Natural killer cell (primary cell): ENCODE measurements at regions of chr2 and their contacts with region 1.

Region 1: GRCh38 chr2:219029829-219030165 is 11.5 kb downstream of the CFAP65 start:
- DNase-seq: peak; percentile 70 to 89
- ATAC-seq: peak; percentile 78 to 97 (median 96)
- H3K4me3 ChIP-seq: no peak overlapping the region
- H3K4me3 Mint-ChIP-seq: no peak overlapping the region
- H3K27ac ChIP-seq: no peak overlapping the region
- H3K27ac Mint-ChIP-seq: no peak overlapping the region
- H3K4me1 ChIP-seq: no peaks in the 10 kb centered on the region
- H3K4me1 Mint-ChIP-seq: no peaks in the 10 kb centered on the region
- H3K27me3 ChIP-seq: no peaks in the 10 kb centered on the region
- H3K27me3 Mint-ChIP-seq: peaks cover 19 to 20% of the 10 kb centered on the region in 2 donors
- CTCF ChIP-seq: peak; percentile 93

Region 2: GRCh38 chr2:218860950-218861381 is 168.8 kb before region 1 on chr2:
- intact Hi-C with region 1: no loop called
- DNase-seq: peak; percentile 13 to 49
- ATAC-seq: peak in 1 of 3 donors; percentile 46
- H3K4me3 ChIP-seq: no peak overlapping the region
- H3K4me3 Mint-ChIP-seq: no peak overlapping the region
- H3K27ac ChIP-seq: no peak overlapping the region
- H3K27ac Mint-ChIP-seq: no peak overlapping the region
- H3K4me1 ChIP-seq: peaks cover 20% of the 10 kb centered on the region
- H3K4me1 Mint-ChIP-seq: peaks cover 0 to 26% of the 10 kb centered on the region in 2 donors
- H3K27me3 ChIP-seq: peaks cover 46% of the 10 kb centered on the region
- H3K27me3 Mint-ChIP-seq: peaks cover 59 to 65% of the 10 kb centered on the region in 2 donors
- CTCF ChIP-seq: no peak

Region 3: DNA sequence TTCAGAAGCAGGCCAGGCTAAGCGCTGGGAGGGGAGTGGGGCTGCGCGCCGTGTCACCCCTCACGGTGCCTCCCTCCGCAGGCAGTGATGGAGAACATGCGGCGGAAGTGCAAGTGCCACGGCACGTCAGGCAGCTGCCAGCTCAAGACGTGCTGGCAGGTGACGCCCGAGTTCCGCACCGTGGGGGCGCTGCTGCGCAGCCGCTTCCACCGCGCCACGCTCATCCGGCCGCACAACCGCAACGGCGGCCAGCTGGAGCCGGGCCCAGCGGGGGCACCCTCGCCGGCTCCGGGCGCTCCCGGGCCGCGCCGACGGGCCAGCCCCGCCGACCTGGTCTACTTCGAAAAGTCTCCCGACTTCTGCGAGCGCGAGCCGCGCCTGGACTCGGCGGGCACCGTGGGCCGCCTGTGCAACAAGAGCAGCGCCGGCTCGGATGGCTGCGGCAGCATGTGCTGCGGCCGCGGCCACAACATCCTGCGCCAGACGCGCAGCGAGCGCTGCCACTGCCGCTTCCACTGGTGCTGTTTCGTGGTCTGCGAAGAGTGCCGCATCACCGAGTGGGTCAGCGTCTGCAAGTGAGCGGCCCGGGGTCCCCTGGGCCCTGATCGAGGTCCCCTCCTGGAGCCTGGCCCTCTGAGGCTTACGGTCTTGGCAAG is 137.0 kb before region 1 on chr2:
- intact Hi-C with region 1: no loop called
- DNase-seq: peak; percentile 88 to 96
- ATAC-seq: peak; percentile 58 to 78 (median 67)
- H3K4me3 ChIP-seq: peak overlapping the region; percentile 31
- H3K4me3 Mint-ChIP-seq: peak overlapping the region; percentile 81
- H3K27ac ChIP-seq: peak overlapping the region; percentile 87
- H3K27ac Mint-ChIP-seq: peak overlapping the region; percentile 89 to 95
- H3K4me1 ChIP-seq: peaks cover 60% of the 10 kb centered on the region
- H3K4me1 Mint-ChIP-seq: peaks cover 38 to 55% of the 10 kb centered on the region in 2 donors
- H3K27me3 ChIP-seq: peaks cover 6% of the 10 kb centered on the region
- H3K27me3 Mint-ChIP-seq: peaks cover 33 to 36% of the 10 kb centered on the region in 2 donors
- CTCF ChIP-seq: peak; percentile 53

Region 4: GRCh38 chr2:218908721-218909619 is 120.8 kb before region 1 on chr2:
- intact Hi-C with region 1: no loop called
- DNase-seq: peak; percentile 86 to 95
- ATAC-seq: peak; percentile 94 to 98 (median 98)
- H3K4me3 ChIP-seq: peak overlapping the region; percentile 51
- H3K4me3 Mint-ChIP-seq: peak overlapping the region; percentile 81
- H3K27ac ChIP-seq: no peak overlapping the region
- H3K27ac Mint-ChIP-seq: peak overlapping the region; percentile 56 to 75
- H3K4me1 ChIP-seq: peaks cover 12% of the 10 kb centered on the region
- H3K4me1 Mint-ChIP-seq: peaks cover 0 to 12% of the 10 kb centered on the region in 2 donors
- H3K27me3 ChIP-seq: peaks cover 3% of the 10 kb centered on the region
- H3K27me3 Mint-ChIP-seq: peaks cover 27 to 28% of the 10 kb centered on the region in 2 donors
- CTCF ChIP-seq: no peak

Region 5: GRCh38 chr2:219090436-219091299 is 60.9 kb after region 1 on chr2:
- intact Hi-C with region 1: no loop called
- DNase-seq: no peak
- ATAC-seq: no peak
- H3K4me3 ChIP-seq: no peak overlapping the region
- H3K4me3 Mint-ChIP-seq: no peak overlapping the region
- H3K27ac ChIP-seq: no peak overlapping the region
- H3K27ac Mint-ChIP-seq: no peak overlapping the region
- H3K4me1 ChIP-seq: no peaks in the 10 kb centered on the region
- H3K4me1 Mint-ChIP-seq: peaks cover 0 to 10% of the 10 kb centered on the region in 2 donors
- H3K27me3 ChIP-seq: no peaks in the 10 kb centered on the region
- H3K27me3 Mint-ChIP-seq: no peaks in the 10 kb centered on the region
- CTCF ChIP-seq: no peak

Region 6: GRCh38 chr2:219119422-219120043 is 89.7 kb after region 1 on chr2:
- intact Hi-C with region 1: loop called (anchors 1 kb)
- DNase-seq: peak; percentile 35 to 77
- ATAC-seq: peak in 2 of 3 donors; percentile 43 to 56
- H3K4me3 ChIP-seq: no peak overlapping the region
- H3K4me3 Mint-ChIP-seq: no peak overlapping the region
- H3K27ac ChIP-seq: no peak overlapping the region
- H3K27ac Mint-ChIP-seq: no peak overlapping the region
- H3K4me1 ChIP-seq: peaks cover 11% of the 10 kb centered on the region
- H3K4me1 Mint-ChIP-seq: peaks cover 19 to 24% of the 10 kb centered on the region in 2 donors
- H3K27me3 ChIP-seq: no peaks in the 10 kb centered on the region
- H3K27me3 Mint-ChIP-seq: no peaks in the 10 kb centered on the region
- CTCF ChIP-seq: peak; percentile 72

Region 7: DNA sequence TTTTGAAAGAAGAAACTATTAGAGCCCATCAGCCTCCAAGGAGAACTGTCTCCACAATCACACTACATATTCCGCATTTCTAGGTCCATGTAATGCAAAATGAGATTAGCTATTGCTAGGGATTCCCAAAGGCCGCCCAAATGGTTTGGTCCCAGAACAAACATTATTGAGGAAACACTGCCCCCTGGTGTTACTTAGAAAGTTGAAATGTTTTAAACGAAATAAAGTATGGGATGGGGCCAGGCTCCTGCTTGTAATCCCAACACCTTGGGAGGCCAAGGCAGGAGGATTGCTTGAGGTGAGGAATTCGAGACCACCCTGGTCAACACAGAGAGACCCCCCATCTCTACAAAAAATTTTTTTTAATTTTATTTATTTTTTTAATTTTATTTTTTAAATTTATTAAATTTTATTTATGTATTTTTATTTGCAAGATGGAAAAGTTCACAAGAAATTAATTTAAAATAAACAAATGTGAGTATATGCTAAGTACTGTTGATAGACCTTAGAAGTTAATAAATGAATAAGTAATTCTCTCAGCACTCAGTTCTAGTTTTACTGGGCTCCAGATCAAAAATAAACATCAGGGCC is 125.4 kb after region 1 on chr2:
- intact Hi-C with region 1: loop called (anchors 1 kb)
- DNase-seq: peak in 1 of 2 donors; percentile 86
- ATAC-seq: peak in 2 of 3 donors; percentile 36 to 43
- H3K4me3 ChIP-seq: no peak overlapping the region
- H3K4me3 Mint-ChIP-seq: no peak overlapping the region
- H3K27ac ChIP-seq: no peak overlapping the region
- H3K27ac Mint-ChIP-seq: no peak overlapping the region
- H3K4me1 ChIP-seq: peaks cover 6% of the 10 kb centered on the region
- H3K4me1 Mint-ChIP-seq: peaks cover 5 to 17% of the 10 kb centered on the region in 2 donors
- H3K27me3 ChIP-seq: no peaks in the 10 kb centered on the region
- H3K27me3 Mint-ChIP-seq: no peaks in the 10 kb centered on the region
- CTCF ChIP-seq: peak; percentile 86